WTC11 (cell line): ENCODE measurements at regions of chr1 and their contacts with region 1.

Region 1: DNA sequence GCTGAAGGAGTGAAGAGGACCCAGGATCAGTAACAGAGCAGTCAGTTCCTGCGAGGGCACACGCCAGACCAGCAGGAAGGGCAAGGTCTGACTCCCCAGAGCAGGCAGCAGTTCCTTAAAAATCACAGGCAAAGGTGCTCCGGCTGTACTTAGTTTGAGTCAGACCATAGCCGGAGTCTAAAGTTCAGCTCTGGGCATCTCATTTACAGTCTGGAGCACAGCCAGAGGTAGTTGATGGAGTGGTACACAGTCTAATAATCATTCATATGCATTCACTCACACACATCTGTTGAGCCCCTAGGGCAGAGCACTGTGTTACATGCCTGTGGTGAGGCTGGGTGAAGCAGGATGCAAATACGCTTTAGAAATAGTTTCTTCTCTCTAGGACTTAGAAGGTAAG is 7.3 kb upstream of the AMIGO1 start:
- DNase-seq: no peak
- ATAC-seq: no peak
- H3K4me3 Mint-ChIP-seq: no peak overlapping the region
- H3K27ac Mint-ChIP-seq: no peak overlapping the region
- H3K4me1 Mint-ChIP-seq: no peaks in the 10 kb centered on the region
- H3K27me3 Mint-ChIP-seq: peaks cover 12% of the 10 kb centered on the region
- CTCF ChIP-seq: no peak

Region 2: DNA sequence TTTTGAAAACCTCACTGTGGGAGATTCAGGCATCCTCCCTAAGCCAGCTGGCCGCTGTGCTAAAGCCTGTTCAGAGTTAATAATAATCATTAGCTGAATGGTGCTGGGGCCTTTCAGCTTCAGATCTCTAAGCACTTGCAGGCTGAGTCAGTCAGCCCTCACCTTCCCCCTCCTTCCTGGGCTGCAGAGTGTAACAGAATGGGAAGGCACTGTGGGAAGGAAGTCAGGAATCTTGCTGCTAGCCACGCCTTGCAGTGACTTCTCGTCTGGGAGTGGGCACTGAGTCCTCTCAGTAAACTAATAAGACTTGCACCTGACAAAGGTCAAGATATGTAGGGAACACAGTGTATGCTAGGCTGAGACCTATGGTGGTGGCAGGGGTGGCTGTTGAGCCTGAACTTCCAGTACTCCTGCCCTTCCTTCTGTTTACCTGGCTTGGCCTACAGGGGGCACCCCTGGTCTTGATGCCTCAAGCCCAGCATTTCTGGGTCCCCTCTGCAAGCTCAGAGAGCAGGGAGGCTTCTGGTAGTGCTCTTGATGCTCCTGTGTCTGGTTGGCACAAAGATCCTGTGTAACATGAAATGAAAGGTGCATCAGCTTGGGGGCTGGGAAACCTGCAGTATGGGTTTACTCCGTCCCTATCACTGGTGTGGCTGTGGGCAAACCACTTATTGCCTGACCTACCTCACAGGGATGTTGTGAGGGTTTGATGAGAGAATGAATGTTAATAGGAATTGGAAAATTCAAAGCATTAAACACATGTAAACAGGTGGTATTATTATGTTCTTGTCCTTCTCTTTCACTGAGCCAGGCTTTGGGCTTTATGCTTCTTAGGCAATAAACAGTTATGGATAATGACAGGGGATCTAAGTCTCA is 17.0 kb before region 1 on chr1:
- CTCF ChIA-PET with region 1: interaction called, 24 read pairs
- POLR2A ChIA-PET with region 1: no interaction called
- DNase-seq: peak; percentile 89
- ATAC-seq: peak; percentile 77
- H3K4me3 Mint-ChIP-seq: no peak overlapping the region
- H3K27ac Mint-ChIP-seq: 0 out of 2 replicates have a peak overlapping the region, but pooled peaks have one; percentile 23
- H3K4me1 Mint-ChIP-seq: peaks cover 28% of the 10 kb centered on the region
- H3K27me3 Mint-ChIP-seq: no peaks in the 10 kb centered on the region
- CTCF ChIP-seq: peak; percentile 40; the same call in 1 of the 2 replicates